Endothelial cell of umbilical vein (primary cell): ENCODE measurements at regions of chr14 and their contacts with region 1.

Region 1: GRCh38 chr14:55599200-55599879 is 19.3 kb downstream of the KTN1 start:
- DNase-seq: no peak
- H3K4me3 ChIP-seq: no peak overlapping the region
- H3K27ac ChIP-seq: no peak overlapping the region
- H3K4me1 ChIP-seq: peaks cover 16% of the 10 kb centered on the region
- H3K27me3 ChIP-seq: no peaks in the 10 kb centered on the region
- CTCF ChIP-seq: no peak
- POLR2A ChIP-seq: no peak

Region 2: DNA sequence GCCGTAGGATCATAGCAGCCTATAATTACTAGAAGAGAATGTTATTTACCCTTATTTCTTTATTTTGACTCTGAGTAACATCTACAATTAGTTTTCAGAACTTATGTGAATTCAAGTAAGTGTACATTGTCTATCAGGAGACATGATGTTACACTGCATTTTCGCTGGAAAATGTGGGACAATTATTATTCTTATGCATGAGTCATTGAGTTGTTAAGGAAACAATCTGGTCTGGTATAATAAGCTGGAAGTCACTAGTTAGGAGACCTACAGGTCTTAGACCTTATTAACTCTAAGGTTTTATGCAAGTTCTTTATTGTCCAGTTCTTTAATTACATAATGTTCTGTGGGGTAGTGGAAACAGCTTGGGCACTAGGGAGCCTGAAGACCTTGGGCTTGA is 13.5 kb before region 1 on chr14:
- CTCF ChIA-PET with region 1: interaction called, 4 read pairs
- POLR2A ChIA-PET with region 1: no interaction called
- dilution Hi-C with region 1: no loop called
- intact Hi-C with region 1: loop called (anchors 2 kb)
- DNase-seq: peak; percentile 86
- H3K4me3 ChIP-seq: no peak overlapping the region
- H3K27ac ChIP-seq: no peak overlapping the region
- H3K4me1 ChIP-seq: peaks cover 20% of the 10 kb centered on the region
- H3K27me3 ChIP-seq: no peaks in the 10 kb centered on the region
- CTCF ChIP-seq: no peak
- POLR2A ChIP-seq: no peak

Region 3: GRCh38 chr14:55654243-55654642 is 54.9 kb after region 1 on chr14:
- CTCF ChIA-PET with region 1: no interaction called
- POLR2A ChIA-PET with region 1: no interaction called
- dilution Hi-C with region 1: no loop called
- intact Hi-C with region 1: no loop called
- DNase-seq: no peak
- H3K4me3 ChIP-seq: no peak overlapping the region
- H3K27ac ChIP-seq: no peak overlapping the region
- H3K4me1 ChIP-seq: no peaks in the 10 kb centered on the region
- H3K27me3 ChIP-seq: no peaks in the 10 kb centered on the region
- CTCF ChIP-seq: no peak
- POLR2A ChIP-seq: no peak